ENCODE measurements at regions of chr9 and their contacts with region 1.

Region 1: GRCh38 chr9:77977210-77977611 is 54.4 kb downstream of the GNAQ start:
- DNase-seq: peak; percentile 68
- ATAC-seq: peak; percentile 87
- H3K4me3 Mint-ChIP-seq: no peak overlapping the region
- H3K27ac Mint-ChIP-seq: peak overlapping the region; percentile 75; the same call in 1 of the 2 replicates
- H3K4me1 Mint-ChIP-seq: peaks cover 73% of the 10 kb centered on the region
- H3K27me3 Mint-ChIP-seq: no peaks in the 10 kb centered on the region
- CTCF ChIP-seq: no peak

Region 2: DNA sequence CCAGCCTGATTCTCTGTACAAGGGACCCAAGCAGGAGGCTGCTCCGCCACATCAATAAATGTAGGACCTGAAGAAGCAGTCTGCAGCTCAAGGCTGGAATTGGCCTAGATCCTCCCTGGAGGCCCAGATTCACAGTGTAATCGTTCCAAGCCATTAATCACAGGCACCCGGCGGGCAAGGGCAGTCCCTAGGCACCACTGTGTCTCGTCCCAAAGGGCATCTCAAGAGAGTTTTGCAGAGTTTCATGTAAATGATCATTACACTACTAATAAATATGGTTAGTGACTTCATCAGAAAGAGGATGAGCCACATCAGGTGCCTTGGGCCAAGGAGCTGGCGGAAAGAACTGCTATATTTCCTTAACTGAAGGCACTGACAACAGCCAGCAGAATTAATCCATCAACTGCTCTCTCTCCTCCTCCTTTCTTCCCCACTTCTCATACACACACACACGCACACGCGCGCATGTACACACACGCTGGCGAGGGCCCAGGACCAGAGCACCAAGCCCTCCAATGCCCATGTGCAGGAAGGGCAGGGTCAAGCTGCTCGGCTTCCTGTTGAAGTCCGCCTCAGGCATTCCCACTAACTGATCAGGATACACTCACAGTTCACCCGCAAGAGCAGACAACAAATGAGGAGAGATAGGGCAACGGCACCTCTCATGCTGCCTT is 20.5 kb after region 1 on chr9:
- CTCF ChIA-PET with region 1: interaction called, 16 read pairs
- POLR2A ChIA-PET with region 1: no interaction called
- DNase-seq: no peak
- ATAC-seq: peak; percentile 58
- H3K4me3 Mint-ChIP-seq: no peak overlapping the region
- H3K27ac Mint-ChIP-seq: peak overlapping the region; percentile 90; the same call in 1 of the 2 replicates
- H3K4me1 Mint-ChIP-seq: peaks cover 24% of the 10 kb centered on the region
- H3K27me3 Mint-ChIP-seq: no peaks in the 10 kb centered on the region
- CTCF ChIP-seq: no peak

Region 3: DNA sequence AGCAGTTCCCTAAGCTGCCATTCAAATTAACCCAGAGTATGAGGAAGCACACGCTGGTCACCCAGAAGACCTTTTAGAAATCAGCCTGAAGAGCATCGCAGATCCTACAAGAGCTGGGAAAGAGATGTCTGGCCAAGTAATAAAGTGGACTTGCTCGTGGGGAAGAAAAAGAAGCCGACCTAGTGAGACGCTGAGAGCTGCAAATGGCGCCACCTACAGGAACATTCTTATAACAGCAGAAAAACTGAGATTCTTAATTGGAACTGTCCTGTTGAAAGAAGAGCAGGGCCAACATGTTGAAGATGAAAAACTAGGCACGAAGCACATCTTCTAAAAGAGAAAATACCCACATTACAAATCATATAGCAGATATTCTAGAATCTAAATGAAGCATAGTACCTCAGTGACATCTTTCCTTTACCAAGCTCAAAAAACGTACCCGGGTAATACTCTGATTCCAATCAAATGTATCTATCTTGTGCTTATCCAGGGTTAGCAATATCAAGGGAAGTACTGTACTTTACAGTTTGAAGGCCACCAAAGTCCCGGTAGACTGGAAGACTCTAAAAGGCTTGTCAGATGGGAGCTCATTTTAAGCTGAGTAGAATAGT is 58.3 kb after region 1 on chr9:
- CTCF ChIA-PET with region 1: interaction called, 42 read pairs
- POLR2A ChIA-PET with region 1: interaction called, 3 read pairs
- DNase-seq: no peak
- ATAC-seq: no peak
- H3K4me3 Mint-ChIP-seq: no peak overlapping the region
- H3K27ac Mint-ChIP-seq: no peak overlapping the region
- H3K4me1 Mint-ChIP-seq: peaks cover 24% of the 10 kb centered on the region
- H3K27me3 Mint-ChIP-seq: peaks cover 3% of the 10 kb centered on the region; the same call in 1 of the 2 replicates
- CTCF ChIP-seq: peak; percentile 76

Region 4: GRCh38 chr9:78115073-78115472 is 137.9 kb after region 1 on chr9:
- CTCF ChIA-PET with region 1: interaction called, 21 read pairs
- POLR2A ChIA-PET with region 1: no interaction called
- DNase-seq: no peak
- ATAC-seq: peak; percentile 87
- H3K4me3 Mint-ChIP-seq: no peak overlapping the region
- H3K27ac Mint-ChIP-seq: no peak overlapping the region
- H3K4me1 Mint-ChIP-seq: no peaks in the 10 kb centered on the region; the same call in 1 of the 2 replicates
- H3K27me3 Mint-ChIP-seq: no peaks in the 10 kb centered on the region
- CTCF ChIP-seq: peak; percentile 54